ENCODE measurements at regions of chr22 and their contacts with region 1.

Region 1: GRCh38 chr22:45577746-45578523 is 75.3 kb downstream of the FBLN1 start:
- DNase-seq: no peak
- H3K4me3 ChIP-seq: no peak overlapping the region
- CTCF ChIP-seq: peak; percentile 95

Region 2: GRCh38 chr22:45564349-45565032 is 13.4 kb before region 1 on chr22:
- CTCF ChIA-PET with region 1: interaction called, 54 read pairs
- POLR2A ChIA-PET with region 1: no interaction called
- DNase-seq: no peak
- H3K4me3 ChIP-seq: no peak overlapping the region
- CTCF ChIP-seq: no peak

Region 3: GRCh38 chr22:45590262-45590661 is 12.3 kb after region 1 on chr22:
- CTCF ChIA-PET with region 1: interaction called, 35 read pairs
- POLR2A ChIA-PET with region 1: no interaction called
- DNase-seq: no peak
- H3K4me3 ChIP-seq: no peak overlapping the region
- CTCF ChIP-seq: no peak

Region 4: GRCh38 chr22:45597460-45598192 is 19.7 kb after region 1 on chr22:
- CTCF ChIA-PET with region 1: interaction called, 35 read pairs
- POLR2A ChIA-PET with region 1: no interaction called
- DNase-seq: no peak
- H3K4me3 ChIP-seq: no peak overlapping the region
- CTCF ChIP-seq: no peak

Region 5: DNA sequence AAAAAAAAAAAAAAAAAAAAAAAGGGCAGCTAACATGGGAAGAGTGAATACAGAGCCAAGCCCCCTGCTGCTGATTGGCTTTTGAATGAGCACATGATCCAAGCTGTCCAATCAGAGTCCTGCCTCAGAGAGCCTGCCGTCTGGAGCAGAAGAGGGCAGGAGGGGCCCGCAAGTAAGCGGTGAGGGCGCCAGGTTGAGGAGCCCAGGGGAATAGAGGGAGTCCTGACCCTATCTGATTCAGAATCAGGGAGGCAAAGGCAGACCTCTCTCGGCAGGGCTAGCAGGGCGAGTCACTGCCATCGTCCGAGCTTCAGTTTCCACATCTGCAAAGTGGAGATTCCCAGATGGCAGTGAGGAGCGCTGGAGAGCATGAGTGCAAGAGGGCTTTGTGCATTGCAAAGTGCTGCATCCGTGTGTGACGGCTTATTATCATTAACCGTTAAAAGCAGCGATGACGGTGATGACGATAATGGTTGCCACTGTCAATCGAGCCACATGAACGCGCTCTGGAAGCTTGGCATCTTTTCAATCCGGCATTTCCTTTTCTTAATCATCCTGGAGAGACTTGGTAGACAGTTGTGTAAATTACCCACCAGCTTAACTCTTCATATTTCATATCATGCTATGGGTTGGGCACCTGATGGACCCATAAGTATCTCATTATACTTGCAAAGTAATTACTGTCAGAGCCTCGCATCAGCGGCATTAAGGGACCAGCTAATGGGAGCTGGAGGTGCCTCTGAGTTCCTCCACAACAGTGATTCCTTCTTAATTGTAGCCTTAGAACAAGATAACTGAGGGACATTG is 25.1 kb after region 1 on chr22:
- CTCF ChIA-PET with region 1: interaction called, 35 read pairs
- POLR2A ChIA-PET with region 1: no interaction called
- DNase-seq: no peak
- H3K4me3 ChIP-seq: peak overlapping the region; percentile 43
- CTCF ChIP-seq: no peak

Region 6: DNA sequence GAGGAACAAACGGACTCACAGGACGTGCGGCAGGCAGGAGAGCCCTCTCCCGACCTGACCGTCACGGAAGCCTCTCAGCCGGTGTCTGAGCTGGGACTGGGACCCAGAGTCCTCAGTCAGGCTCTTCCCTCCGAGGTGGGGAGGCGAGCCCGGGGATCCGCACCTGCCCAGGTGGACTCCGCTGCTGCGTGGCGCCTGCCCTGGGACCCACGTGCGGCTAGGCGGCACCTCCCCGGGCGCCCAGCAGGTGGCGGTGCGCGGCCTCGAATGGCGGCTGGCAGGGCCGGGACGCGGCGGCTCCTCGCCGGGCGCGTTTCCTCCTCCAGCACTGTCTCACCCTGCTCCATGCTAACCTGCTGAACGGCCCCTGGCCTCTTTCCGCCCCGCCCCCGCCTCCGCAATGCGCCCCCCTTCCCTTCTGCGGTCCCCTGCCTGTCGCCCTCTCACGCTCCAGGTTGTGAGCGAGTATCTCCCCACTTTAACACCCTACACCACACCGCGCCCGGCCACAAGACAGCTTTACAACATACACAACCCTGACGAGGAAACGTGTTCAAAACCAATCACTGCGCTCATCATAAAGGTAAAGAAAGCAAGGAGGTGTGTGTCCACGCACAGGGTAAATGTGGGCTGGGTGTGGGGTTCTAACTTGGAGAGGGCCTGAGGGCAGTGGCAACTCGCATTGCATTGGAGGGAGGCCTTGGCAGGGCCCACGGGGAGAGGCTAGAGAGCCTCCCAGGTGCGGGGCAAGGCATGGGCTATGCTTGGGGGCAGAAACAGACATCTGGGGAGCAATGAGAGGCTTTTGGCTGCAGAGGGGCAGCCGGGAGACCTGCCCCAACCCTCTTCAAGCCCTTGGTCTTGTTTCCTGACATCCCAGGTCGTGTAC is 67.8 kb after region 1 on chr22:
- CTCF ChIA-PET with region 1: interaction called, 20 read pairs
- POLR2A ChIA-PET with region 1: no interaction called
- DNase-seq: no peak
- H3K4me3 ChIP-seq: peak overlapping the region; percentile 43
- CTCF ChIP-seq: peak; percentile 89

Region 7: DNA sequence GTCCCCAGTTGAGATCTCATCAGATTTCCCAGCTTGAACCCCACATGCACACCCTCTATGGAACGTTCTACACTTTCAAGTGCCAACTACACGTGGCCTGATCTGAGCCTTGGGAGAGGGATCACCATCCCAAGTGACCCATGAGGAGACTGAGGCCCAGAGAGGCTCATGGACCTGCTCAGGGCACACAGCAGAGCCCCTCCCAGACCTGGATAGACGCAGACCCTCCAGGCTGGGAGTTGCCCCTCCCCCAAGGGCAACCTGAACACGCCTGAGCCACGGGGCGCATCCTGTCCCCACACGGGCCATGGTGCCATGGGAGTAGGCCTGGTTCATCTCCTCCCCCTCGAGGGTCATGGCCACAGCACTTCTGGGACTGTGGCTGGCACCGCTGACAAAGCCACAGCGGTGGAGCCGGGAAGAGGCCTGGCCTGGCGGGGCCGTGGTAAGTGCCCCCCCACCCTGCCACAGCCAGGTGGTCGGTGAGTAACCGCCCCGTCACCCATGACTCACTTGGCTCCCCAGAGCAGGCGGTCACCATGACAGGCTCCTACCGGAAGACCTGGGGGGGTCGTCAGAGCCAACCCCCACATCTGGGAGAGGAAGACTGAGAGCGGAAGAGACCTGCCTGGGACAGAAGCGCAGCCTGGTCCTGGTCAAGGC is 390.9 kb after region 1 on chr22:
- CTCF ChIA-PET with region 1: interaction called, 12 read pairs
- POLR2A ChIA-PET with region 1: no interaction called
- DNase-seq: peak; percentile 12
- H3K4me3 ChIP-seq: no peak overlapping the region
- CTCF ChIP-seq: no peak

Measured in AG04449 (cell line).